ENCODE measurements at regions of chr3 and their contacts with region 1.

Region 1: DNA sequence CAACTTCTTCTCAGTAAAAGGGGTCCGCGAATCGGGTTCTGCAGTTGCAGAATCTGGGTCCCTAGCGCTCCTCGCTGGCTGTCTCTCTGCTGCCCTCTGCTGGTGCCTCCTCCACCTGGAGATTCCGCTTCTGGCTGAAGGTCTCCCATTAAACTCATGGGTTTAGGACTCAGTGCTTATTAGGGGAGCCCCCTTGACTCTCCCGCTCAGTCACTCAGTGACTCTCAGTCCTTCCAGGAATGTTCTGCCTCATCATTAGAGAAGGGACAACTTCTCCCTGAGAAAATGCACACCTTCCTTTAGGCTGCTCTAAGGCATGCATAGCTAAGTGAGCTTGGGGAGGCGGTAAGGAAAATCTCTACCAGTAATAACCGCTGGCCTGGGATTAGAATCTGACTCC is 7.1 kb downstream of the CPN2 start:
- DNase-seq: peak; percentile 48 to 83 (median 71)
- ATAC-seq: peak; percentile 67
- H3K4me3 ChIP-seq: no peak overlapping the region
- H3K4me3 Mint-ChIP-seq: no peak overlapping the region
- H3K27ac ChIP-seq: no peak overlapping the region
- H3K27ac Mint-ChIP-seq: no peak overlapping the region
- H3K4me1 ChIP-seq: no peaks in the 10 kb centered on the region
- H3K4me1 Mint-ChIP-seq: no peaks in the 10 kb centered on the region
- H3K27me3 ChIP-seq: no peaks in the 10 kb centered on the region
- H3K27me3 Mint-ChIP-seq: peaks cover 10% of the 10 kb centered on the region
- CTCF ChIP-seq: peak; percentile 97

Region 2: DNA sequence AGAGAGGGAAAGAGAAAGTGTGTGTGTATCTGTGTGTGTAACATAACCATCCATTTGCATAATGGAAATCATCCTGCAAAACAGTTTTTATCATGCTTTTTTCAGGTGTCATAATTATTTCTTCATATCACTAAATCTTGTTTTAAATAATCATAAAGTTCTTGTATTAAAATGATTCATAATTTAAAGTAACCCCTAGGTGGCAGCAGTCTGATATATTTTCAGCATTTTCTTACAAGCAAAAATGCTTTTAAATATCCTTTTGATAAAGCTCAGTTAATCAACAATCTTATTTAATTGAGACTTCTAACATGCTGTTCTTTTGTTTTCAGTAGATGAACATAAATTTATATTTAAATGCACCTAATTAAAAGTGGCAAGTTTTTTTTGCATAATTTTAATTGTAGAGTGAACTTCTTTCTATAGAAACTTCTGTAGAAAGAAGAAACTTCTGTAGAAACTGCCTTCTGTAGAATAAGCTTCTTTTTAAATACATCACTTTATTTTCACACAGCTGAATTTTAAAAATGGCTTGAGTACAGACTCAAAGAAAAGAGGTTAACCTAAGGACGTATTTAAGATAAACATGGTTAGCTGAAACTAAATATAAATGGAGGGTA is 678.5 kb before region 1 on chr3:
- CTCF ChIA-PET with region 1: no interaction called
- POLR2A ChIA-PET with region 1: no interaction called
- intact Hi-C with region 1: loop called in 1 of 2 experiments (anchors 1 kb)
- DNase-seq: peak in 2 of 9 experiments; percentile 34 to 53
- ATAC-seq: no peak
- H3K4me3 ChIP-seq: no peak overlapping the region
- H3K4me3 Mint-ChIP-seq: no peak overlapping the region
- H3K27ac ChIP-seq: no peak overlapping the region
- H3K27ac Mint-ChIP-seq: no peak overlapping the region
- H3K4me1 ChIP-seq: no peaks in the 10 kb centered on the region
- H3K4me1 Mint-ChIP-seq: no peaks in the 10 kb centered on the region
- H3K27me3 ChIP-seq: no peaks in the 10 kb centered on the region
- H3K27me3 Mint-ChIP-seq: no peaks in the 10 kb centered on the region
- CTCF ChIP-seq: peak; percentile 76

Region 3: GRCh38 chr3:194294199-194294894 is 49.7 kb before region 1 on chr3:
- CTCF ChIA-PET with region 1: no interaction called
- POLR2A ChIA-PET with region 1: no interaction called
- intact Hi-C with region 1: no loop called
- DNase-seq: no peak
- ATAC-seq: no peak
- H3K4me3 ChIP-seq: no peak overlapping the region
- H3K4me3 Mint-ChIP-seq: no peak overlapping the region
- H3K27ac ChIP-seq: no peak overlapping the region
- H3K27ac Mint-ChIP-seq: no peak overlapping the region
- H3K4me1 ChIP-seq: no peaks in the 10 kb centered on the region
- H3K4me1 Mint-ChIP-seq: no peaks in the 10 kb centered on the region
- H3K27me3 ChIP-seq: no peaks in the 10 kb centered on the region
- H3K27me3 Mint-ChIP-seq: peaks cover 9% of the 10 kb centered on the region
- CTCF ChIP-seq: no peak

Region 4: GRCh38 chr3:194323785-194324735 is 20.0 kb before region 1 on chr3:
- CTCF ChIA-PET with region 1: interaction called, 43 read pairs
- POLR2A ChIA-PET with region 1: no interaction called
- intact Hi-C with region 1: no loop called
- DNase-seq: peak in 8 of 9 experiments; percentile 20 to 66 (median 34)
- ATAC-seq: peak; percentile 82
- H3K4me3 ChIP-seq: peak overlapping the region; percentile 40 to 46
- H3K4me3 Mint-ChIP-seq: no peak overlapping the region
- H3K27ac ChIP-seq: no peak overlapping the region
- H3K27ac Mint-ChIP-seq: no peak overlapping the region
- H3K4me1 ChIP-seq: peaks cover 3% of the 10 kb centered on the region
- H3K4me1 Mint-ChIP-seq: no peaks in the 10 kb centered on the region
- H3K27me3 ChIP-seq: peaks cover 0 to 24% of the 10 kb centered on the region in 2 experiments
- H3K27me3 Mint-ChIP-seq: peaks cover 3% of the 10 kb centered on the region
- CTCF ChIP-seq: no peak

Region 5: GRCh38 chr3:194395778-194396547 is 52.0 kb after region 1 on chr3:
- CTCF ChIA-PET with region 1: interaction called, 42 read pairs
- POLR2A ChIA-PET with region 1: no interaction called
- intact Hi-C with region 1: no loop called
- DNase-seq: peak in 8 of 9 experiments; percentile 23 to 80 (median 59)
- ATAC-seq: peak; percentile 72
- H3K4me3 ChIP-seq: peak overlapping the region; percentile 51 to 60
- H3K4me3 Mint-ChIP-seq: peak overlapping the region; percentile 81
- H3K27ac ChIP-seq: peak overlapping the region; percentile 48 to 63
- H3K27ac Mint-ChIP-seq: peak overlapping the region; percentile 82
- H3K4me1 ChIP-seq: peaks cover 30% of the 10 kb centered on the region
- H3K4me1 Mint-ChIP-seq: peaks cover 51% of the 10 kb centered on the region
- H3K27me3 ChIP-seq: peaks cover 0 to 3% of the 10 kb centered on the region in 2 experiments
- H3K27me3 Mint-ChIP-seq: peaks cover 2% of the 10 kb centered on the region
- CTCF ChIP-seq: no peak

Region 6: DNA sequence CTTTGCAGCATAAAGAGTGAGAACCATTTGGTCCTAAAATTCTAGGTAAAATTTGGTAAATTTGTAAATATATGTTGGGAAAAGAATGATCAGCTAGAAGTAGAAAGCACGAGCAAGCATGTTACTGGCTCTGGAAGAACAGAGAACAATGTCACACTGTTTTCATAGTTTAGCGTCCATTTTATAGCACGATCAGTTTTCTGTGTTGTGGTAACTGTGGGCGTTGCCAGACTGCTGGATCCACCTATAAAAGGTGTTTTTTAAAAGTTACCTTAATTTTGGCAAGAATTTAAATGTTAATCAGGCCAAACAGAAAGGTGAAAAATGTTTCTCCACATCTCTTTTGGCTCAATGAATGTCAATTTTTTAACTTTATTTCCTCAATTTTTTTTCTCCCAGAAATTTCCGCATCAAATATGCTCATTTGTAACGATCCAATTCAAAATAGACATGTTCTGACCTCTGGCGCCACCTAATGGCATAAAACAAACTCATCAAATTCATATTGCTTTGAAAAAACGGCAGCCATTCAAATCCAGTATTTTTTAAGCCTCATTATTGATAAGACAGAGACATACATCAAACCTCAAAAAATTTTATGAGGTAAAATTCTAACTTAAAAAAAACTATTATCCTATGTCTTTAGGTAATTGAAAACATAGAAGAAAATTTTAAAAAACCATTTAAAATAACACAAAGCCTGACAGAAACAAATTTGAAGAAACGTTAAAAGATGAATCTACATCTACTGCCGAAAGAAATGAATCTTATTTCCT is 60.5 kb after region 1 on chr3:
- CTCF ChIA-PET with region 1: interaction called, 114 read pairs
- POLR2A ChIA-PET with region 1: no interaction called
- intact Hi-C with region 1: no loop called
- DNase-seq: peak in 4 of 9 experiments; percentile 37 to 75 (median 58)
- ATAC-seq: peak; percentile 66
- H3K4me3 ChIP-seq: no peak overlapping the region
- H3K4me3 Mint-ChIP-seq: no peak overlapping the region
- H3K27ac ChIP-seq: no peak overlapping the region
- H3K27ac Mint-ChIP-seq: no peak overlapping the region
- H3K4me1 ChIP-seq: peaks cover 7% of the 10 kb centered on the region
- H3K4me1 Mint-ChIP-seq: peaks cover 7% of the 10 kb centered on the region
- H3K27me3 ChIP-seq: no peaks in the 10 kb centered on the region
- H3K27me3 Mint-ChIP-seq: peaks cover 2% of the 10 kb centered on the region
- CTCF ChIP-seq: peak; percentile 88